ENCODE measurements at regions of chr20 and their contacts with region 1.

Region 1: DNA sequence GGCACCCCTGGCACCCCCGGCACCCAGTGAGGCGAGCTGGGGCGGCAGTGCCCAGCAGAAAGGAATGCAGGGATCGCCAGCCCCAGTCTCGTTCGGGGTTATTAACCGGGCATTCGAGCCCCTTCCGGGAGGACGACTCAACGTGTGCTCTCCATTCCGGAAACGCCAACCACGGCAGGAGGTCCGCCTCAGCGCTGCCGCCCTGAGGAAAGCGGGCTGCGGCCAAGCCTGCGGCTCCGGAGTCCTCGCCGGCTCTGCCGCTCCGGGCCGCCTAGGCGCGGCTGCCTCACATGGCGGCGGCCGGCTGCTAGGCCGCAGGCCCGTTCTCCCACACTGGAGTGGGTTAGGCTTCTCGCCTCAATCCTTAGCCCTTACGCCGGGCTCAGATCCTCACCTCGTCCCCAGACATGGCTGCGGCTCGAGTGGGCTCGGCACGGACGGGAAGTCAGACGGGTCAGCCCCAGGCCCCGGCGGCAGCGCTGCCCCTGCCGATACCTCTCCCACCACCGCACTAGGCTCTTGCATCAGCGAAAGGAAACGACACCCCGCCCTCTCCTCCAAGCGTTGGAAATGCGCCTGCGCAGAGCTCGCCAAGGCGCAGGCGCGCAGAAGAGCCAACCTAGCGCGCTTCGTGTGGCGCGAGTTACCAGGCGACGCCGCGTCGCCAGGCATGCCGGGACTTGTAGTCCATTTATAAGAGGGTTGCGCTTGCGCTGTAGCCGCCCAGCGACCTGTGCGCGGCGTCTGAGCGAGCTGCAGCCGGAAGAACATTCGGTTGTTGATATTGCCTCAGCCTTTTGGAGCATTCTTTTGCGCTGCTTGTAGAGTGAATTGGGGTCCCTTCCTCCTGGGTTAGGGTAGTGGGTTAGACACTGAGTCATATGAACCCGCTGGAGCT is at the start of gene EIF2S2:
- DNase-seq: peak; percentile 97
- H3K4me3 Mint-ChIP-seq: peak within 1 kb of the TSS; percentile 96
- H3K27ac Mint-ChIP-seq: peak within 1 kb of the TSS; percentile 93
- H3K4me1 Mint-ChIP-seq: peaks cover 38% of the 10 kb centered on the region
- H3K27me3 Mint-ChIP-seq: no peaks in the 10 kb centered on the region
- total RNA-seq, gene EIF2S2: 202 to 207 TPM

Region 2: DNA sequence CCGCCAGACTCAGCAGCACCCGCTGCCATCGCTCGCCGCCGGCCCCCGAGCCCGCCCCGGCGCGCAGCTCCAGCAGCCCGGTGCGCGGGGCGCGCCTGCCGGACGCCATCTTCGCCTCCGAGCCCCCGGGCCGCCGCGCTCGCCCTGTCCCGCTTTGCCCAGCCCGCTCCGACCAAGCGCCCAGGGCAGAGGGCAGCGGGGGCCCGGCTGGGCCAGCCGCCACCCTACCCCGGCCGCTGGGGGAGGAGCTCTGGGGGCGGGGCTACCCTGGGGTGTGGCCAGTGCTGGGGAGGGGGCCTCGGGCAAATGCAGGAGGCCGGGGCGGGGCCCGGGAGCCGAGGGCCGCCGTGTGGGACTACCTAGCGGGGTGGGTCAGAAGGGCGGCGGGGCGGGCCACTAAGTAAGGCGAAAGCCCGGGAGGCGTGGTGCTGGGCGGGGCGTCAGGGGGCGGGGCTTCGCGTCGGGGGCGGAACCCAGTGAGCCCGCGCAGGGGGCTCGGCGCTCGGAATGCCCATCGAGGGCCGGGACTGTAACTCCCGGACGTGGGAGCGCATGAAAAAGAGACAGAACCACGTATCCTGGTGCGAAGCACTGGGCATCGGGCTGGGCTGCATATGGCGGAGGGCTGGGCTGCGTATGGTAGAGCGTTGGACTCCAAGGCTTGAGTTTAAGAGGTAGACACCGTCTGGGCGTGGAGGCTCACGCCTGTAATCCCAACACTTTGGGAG is 668.3 kb before region 1 on chr20 and contains the start of gene SNTA1:
- CTCF ChIA-PET with region 1: no interaction called
- intact Hi-C with region 1: loop called (anchors 10 kb)
- DNase-seq: peak; percentile 88
- H3K4me3 Mint-ChIP-seq: peak within 1 kb of the TSS; percentile 84
- H3K27ac Mint-ChIP-seq: peak within 1 kb of the TSS; percentile 46
- H3K4me1 Mint-ChIP-seq: peaks cover 10% of the 10 kb centered on the region
- H3K27me3 Mint-ChIP-seq: no peaks in the 10 kb centered on the region
- total RNA-seq, gene SNTA1: 2.6 to 2.9 TPM

Region 3: GRCh38 chr20:33992923-33993575 is 118.9 kb before region 1 on chr20:
- CTCF ChIA-PET with region 1: interaction called, 3 read pairs
- intact Hi-C with region 1: loop called (anchors 1 kb)
- DNase-seq: peak; percentile 100
- H3K4me3 Mint-ChIP-seq: peak overlapping the region; percentile 90
- H3K27ac Mint-ChIP-seq: peak overlapping the region; percentile 98
- H3K4me1 Mint-ChIP-seq: peaks cover 46% of the 10 kb centered on the region
- H3K27me3 Mint-ChIP-seq: no peaks in the 10 kb centered on the region

Region 4: DNA sequence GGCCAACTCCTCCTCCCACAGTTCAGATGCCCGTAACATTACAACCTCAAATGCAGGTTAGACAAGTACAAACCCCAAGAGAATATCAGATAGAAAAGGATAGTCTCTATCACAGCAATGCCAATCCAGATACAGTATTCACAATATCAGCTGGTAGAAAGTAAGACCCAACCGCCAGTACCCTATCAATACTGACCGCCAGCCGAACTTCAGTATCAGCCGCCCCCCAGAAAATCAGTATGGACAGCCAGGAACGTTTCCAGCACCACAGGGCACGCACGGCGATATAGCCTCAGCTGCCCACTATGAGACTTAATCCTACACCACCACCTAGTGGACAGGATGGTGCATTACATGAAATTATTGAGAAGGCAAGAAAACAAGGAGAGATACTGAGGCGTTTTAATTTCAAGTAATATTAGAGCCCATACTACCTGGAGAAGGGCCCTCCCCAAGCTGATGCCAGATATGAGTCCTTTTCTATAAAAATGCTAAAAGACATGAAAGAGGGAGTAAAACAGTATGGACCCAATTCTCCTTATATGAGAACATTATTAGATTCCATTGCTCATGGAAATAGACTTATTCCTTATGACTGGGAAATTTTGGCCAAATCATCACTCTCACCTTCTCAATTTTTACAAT is 17.7 kb after region 1 on chr20:
- CTCF ChIA-PET with region 1: interaction called, 10 read pairs
- intact Hi-C with region 1: no loop called
- DNase-seq: peak; percentile 66
- H3K4me3 Mint-ChIP-seq: no peak overlapping the region
- H3K27ac Mint-ChIP-seq: no peak overlapping the region
- H3K4me1 Mint-ChIP-seq: peaks cover 8% of the 10 kb centered on the region
- H3K27me3 Mint-ChIP-seq: no peaks in the 10 kb centered on the region

Region 5: DNA sequence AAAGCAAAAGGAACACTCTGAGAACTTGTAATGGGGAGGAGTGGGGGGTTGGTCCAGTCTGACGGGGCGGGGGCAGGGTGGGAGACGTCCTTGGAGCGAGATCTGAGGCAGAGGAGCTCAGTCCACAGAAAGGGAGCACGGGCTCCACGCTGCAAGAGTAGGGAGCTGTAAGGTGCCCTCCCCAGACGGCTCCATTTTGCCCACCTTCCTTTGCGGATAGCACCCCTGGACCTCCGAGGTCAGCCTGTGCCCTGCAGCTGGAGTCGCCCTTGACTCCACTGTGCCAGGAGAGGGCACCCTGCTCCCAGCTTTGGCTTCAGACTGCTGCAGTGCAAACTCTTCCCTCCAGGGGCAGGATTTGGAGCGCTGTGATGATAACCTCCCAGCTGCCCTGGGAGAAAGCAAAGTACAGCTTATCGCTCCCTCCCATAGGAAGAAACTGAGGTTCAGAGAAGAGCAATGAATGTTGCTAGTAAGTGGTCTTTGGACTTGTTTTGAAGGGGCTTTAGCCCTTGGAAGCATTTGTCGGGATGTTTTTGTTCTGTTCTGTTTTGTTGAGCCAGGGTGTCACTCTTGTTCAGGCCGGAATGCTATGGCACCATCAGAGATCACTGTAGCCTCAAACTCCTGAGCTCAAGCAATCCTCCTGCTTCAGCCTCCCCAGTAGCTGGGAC is 200.7 kb after region 1 on chr20:
- CTCF ChIA-PET with region 1: no interaction called
- intact Hi-C with region 1: no loop called
- DNase-seq: peak; percentile 95
- H3K4me3 Mint-ChIP-seq: no peak overlapping the region
- H3K27ac Mint-ChIP-seq: no peak overlapping the region
- H3K4me1 Mint-ChIP-seq: peaks cover 11% of the 10 kb centered on the region
- H3K27me3 Mint-ChIP-seq: peaks cover 14% of the 10 kb centered on the region

Region 6: GRCh38 chr20:34363062-34363464 is 251.1 kb after region 1 on chr20 and contains the start of gene ITCH:
- CTCF ChIA-PET with region 1: no interaction called
- intact Hi-C with region 1: loop called (anchors 2 kb)
- DNase-seq: peak; percentile 96
- H3K4me3 Mint-ChIP-seq: peak within 1 kb of the TSS; percentile 97
- H3K27ac Mint-ChIP-seq: peak within 1 kb of the TSS; percentile 95
- H3K4me1 Mint-ChIP-seq: peaks cover 34% of the 10 kb centered on the region
- H3K27me3 Mint-ChIP-seq: no peaks in the 10 kb centered on the region
- total RNA-seq, gene ITCH: 35.3 to 40.0 TPM

Region 7: GRCh38 chr20:34437330-34437986 is 325.5 kb after region 1 on chr20:
- CTCF ChIA-PET with region 1: no interaction called
- intact Hi-C with region 1: no loop called
- DNase-seq: no peak
- H3K4me3 Mint-ChIP-seq: no peak overlapping the region
- H3K27ac Mint-ChIP-seq: peak overlapping the region; percentile 35
- H3K4me1 Mint-ChIP-seq: peaks cover 19% of the 10 kb centered on the region
- H3K27me3 Mint-ChIP-seq: no peaks in the 10 kb centered on the region

Region 8: GRCh38 chr20:34579979-34580940 is 468.3 kb after region 1 on chr20:
- CTCF ChIA-PET with region 1: no interaction called
- intact Hi-C with region 1: loop called (anchors 5 kb)
- DNase-seq: peak; percentile 26
- H3K4me3 Mint-ChIP-seq: no peak overlapping the region
- H3K27ac Mint-ChIP-seq: peak overlapping the region; percentile 94
- H3K4me1 Mint-ChIP-seq: peaks cover 24% of the 10 kb centered on the region
- H3K27me3 Mint-ChIP-seq: no peaks in the 10 kb centered on the region

Region 9: GRCh38 chr20:35092524-35093266 is 980.7 kb after region 1 on chr20 and contains the start of gene TRPC4AP:
- CTCF ChIA-PET with region 1: no interaction called
- intact Hi-C with region 1: loop called (anchors 5 kb)
- DNase-seq: peak; percentile 90
- H3K4me3 Mint-ChIP-seq: peak within 1 kb of the TSS; percentile 89
- H3K27ac Mint-ChIP-seq: peak within 1 kb of the TSS; percentile 100
- H3K4me1 Mint-ChIP-seq: peaks cover 59% of the 10 kb centered on the region
- H3K27me3 Mint-ChIP-seq: no peaks in the 10 kb centered on the region
- total RNA-seq, gene TRPC4AP: 49.6 to 51.7 TPM